Activated T-helper 2 cell treated with anti-CD3 and anti-CD28 coated beads, Interferon-gamma antibody, Interleukin-2, Interleukin-4, amounts not matched to agents 10 μg/mL and 5 μg/mL and 100 μg/mL, durations not matched to agents 14 hours and 24 hours and 36 hours (primary cell): ENCODE measurements at regions of chr2 and their contacts with region 1.

Region 1: DNA sequence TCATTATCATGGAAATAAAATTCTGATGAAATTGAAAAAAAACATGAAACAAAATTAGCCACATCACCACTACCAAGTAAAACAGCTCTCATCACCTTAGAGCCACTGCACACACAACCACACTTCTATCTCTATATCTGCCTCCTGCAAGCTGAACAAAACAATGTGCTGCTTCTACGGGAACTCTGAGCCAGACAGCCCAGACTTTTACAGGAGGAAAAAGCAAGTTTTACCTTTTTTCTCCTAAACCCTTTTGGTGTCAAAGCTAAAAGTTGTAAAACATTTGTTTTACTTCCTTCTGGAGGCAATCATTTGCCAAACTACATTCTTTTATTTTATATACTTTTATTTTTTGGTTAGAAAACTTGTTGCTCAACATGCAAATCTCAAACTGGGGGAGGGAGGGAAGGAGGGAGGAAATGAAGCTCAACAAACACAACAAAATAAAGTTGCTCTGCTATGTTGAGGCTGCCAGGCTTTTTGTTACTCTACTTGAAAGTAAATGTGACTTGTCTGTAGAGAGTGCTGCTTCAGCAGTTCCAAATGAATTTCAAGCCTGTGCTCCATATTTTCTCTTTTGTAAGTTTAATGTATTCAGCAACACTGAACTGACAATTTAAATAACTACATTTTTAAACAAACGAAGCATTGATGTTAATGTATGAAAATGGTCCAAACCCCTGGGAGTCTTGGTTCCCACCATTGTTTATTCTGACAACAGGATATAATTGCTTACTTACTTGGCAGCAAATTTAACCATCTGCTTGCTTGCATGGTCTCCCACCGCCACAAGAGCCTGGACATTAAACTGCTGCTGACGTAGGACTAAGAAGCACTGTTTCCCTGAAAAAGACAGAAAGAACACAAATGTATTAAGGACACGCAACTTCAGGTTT is 24.5 kb downstream of the DARS1 start:
- DNase-seq: peak; percentile 32
- H3K4me3 Mint-ChIP-seq: peak overlapping the region; percentile 66
- H3K27ac Mint-ChIP-seq: peak overlapping the region; percentile 96
- H3K4me1 Mint-ChIP-seq: peaks cover 57% of the 10 kb centered on the region
- H3K27me3 Mint-ChIP-seq: no peaks in the 10 kb centered on the region

Region 2: GRCh38 chr2:135391957-135392356 is 568.9 kb before region 1 on chr2:
- intact Hi-C with region 1: no loop called
- DNase-seq: no peak
- H3K4me3 Mint-ChIP-seq: no peak overlapping the region
- H3K27ac Mint-ChIP-seq: no peak overlapping the region
- H3K4me1 Mint-ChIP-seq: no peaks in the 10 kb centered on the region
- H3K27me3 Mint-ChIP-seq: no peaks in the 10 kb centered on the region

Region 3: DNA sequence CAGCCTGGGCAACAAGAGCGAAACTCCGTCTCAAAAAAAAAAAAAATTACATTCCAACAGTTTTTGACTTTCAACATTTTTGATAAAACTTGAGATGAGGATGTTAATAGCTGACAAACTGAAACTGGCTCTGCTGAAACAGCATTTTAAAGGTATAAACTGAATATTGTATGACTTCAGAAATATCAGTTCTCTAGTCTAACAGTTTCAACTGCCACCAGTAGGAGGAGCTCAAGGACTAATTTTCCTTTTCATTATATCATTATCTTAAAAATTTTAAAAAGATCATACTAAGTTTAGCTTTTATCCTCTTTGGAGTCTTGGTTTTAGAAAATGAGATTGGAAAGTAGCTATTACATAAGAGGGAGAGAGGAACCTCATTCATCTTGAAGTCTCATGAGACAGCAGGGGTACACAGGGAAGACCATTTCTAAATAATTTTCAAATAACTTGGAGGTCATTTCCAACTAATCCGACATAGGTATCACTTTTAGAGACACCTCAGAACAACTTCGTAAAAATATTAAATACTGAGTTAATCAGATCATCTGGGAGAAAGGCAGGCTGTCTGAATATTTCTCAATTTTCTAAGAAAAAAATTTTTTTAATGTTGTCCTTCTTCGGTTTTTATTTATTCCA is 47.1 kb before region 1 on chr2:
- intact Hi-C with region 1: loop called (anchors 5 kb)
- DNase-seq: no peak
- H3K4me3 Mint-ChIP-seq: no peak overlapping the region
- H3K27ac Mint-ChIP-seq: peak overlapping the region; percentile 76
- H3K4me1 Mint-ChIP-seq: peaks cover 14% of the 10 kb centered on the region
- H3K27me3 Mint-ChIP-seq: no peaks in the 10 kb centered on the region

Region 4: DNA sequence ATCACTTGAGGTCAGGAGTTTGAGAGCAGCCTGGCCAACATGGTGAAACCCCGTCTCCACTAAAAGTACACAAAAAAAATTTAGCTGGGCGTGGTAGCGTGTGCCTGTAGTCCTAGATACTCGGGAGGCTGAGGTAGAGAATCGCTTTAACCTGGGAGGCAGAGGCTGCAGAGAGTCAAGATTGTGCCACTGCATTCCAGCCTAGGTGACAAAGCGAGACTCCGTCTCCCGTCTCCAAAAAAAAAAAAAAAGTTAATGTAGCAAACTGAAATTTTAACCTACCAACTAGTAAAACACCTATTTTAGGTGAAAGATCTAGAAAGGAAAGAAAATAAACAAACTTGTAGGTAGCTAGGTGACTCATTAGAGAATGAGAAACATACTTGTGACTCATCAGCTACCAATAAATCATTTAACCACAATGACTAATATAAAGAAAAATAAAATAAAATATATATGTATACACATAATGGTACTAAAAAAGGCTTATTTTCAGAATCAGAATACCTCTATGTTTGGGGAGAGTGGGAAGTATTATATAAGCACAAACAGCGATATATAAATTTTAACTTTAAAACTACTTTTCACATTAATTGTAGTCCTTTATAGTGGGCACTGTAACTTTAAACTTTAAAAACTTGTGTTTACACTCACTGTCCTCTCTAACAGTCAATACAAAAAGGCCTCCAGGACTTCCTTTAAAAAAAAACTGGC is 12.1 kb before region 1 on chr2:
- intact Hi-C with region 1: loop called (anchors 1 kb)
- DNase-seq: no peak
- H3K4me3 Mint-ChIP-seq: no peak overlapping the region
- H3K27ac Mint-ChIP-seq: peak overlapping the region; percentile 89
- H3K4me1 Mint-ChIP-seq: peaks cover 63% of the 10 kb centered on the region
- H3K27me3 Mint-ChIP-seq: no peaks in the 10 kb centered on the region